Right cardiac atrium (tissue), 5 donors: ENCODE measurements at regions of chr4 and their contacts with region 1.

Region 1: DNA sequence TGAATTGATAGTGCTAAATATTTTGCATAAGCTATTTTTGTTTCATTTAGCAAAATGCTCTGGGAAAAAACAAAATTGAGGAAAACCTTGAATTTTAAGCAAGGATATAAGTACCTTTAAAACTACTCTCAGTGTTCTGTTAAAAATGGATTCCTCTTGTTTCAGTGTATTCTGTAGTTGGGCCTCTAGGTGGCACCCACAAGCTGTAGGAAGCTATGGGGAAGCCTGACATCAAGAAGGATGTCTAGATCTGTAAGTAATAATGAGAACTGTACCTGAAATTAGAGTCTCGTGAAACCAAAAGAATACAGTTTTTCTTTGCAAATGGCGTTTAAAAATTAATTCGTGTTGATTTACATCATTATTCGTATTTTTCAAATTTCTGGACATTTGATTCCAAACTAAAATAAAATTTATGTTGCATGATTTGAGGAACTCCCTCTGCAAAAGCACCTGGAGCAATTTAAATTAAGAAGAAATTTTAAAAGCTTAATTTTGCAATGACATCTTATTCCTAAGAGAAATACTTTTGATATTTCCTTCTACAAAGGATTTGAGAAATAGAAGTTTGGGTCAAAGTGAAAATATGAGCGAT is 51.2 kb downstream of the TMPRSS11E start:
- DNase-seq: peak in 2 of 3 donors; percentile 35 to 39
- ATAC-seq: peak; percentile 48 to 68
- H3K4me3 ChIP-seq: no peak overlapping the region
- H3K27ac ChIP-seq: no peak overlapping the region
- H3K4me1 ChIP-seq: no peaks in the 10 kb centered on the region
- H3K27me3 ChIP-seq: no peaks in the 10 kb centered on the region

Region 2: DNA sequence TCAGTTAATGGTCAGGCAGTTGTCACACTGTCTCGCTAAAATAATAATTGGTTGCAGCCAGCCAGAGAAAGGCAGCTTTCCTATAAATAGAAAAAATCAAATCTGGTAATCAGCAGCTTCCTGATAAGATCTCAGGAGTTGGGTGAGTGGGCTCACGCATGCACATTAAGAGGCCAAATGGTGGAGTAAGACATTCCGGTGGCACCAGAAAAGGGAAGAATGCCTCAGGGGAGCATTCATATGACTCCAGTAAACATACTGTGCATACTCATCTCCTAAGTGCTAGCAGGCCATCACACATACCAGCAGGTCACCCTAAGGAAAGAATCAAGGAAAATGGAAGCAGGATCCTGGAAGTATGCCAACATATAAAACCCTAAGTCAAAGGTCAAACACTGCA is 131.9 kb after region 1 on chr4:
- intact Hi-C with region 1: loop called in 1 of 4 experiments (anchors 5 kb)
- DNase-seq: no peak
- ATAC-seq: no peak
- H3K4me3 ChIP-seq: no peak overlapping the region
- H3K27ac ChIP-seq: no peak overlapping the region
- H3K4me1 ChIP-seq: no peaks in the 10 kb centered on the region
- H3K27me3 ChIP-seq: no peaks in the 10 kb centered on the region

Region 3: DNA sequence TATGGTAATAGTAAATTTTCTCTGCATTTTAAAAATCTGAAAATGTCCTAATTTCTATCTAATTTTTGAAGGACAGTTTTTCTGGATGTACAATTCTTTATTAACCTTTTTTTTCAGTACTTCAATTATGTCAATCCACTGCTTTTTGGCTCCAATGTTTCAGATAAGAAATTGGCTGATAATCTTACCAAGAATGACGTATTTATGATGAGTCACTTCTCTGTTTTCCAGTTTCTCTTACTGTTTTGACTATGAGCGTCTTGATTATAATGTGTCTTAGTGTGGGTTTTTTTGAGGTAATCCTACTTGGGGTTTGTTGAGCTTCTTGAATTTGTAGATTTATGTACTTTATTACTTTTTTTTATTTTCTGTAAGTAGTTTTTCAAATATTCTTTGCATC is 668.8 kb after region 1 on chr4:
- intact Hi-C with region 1: loop called in 3 of 4 experiments (anchors 5 to 10 kb)
- DNase-seq: no peak
- ATAC-seq: no peak
- H3K4me3 ChIP-seq: no peak overlapping the region
- H3K27ac ChIP-seq: no peak overlapping the region
- H3K4me1 ChIP-seq: no peaks in the 10 kb centered on the region
- H3K27me3 ChIP-seq: no peaks in the 10 kb centered on the region